ENCODE measurements at regions of chr1 and their contacts with region 1.

Region 1: DNA sequence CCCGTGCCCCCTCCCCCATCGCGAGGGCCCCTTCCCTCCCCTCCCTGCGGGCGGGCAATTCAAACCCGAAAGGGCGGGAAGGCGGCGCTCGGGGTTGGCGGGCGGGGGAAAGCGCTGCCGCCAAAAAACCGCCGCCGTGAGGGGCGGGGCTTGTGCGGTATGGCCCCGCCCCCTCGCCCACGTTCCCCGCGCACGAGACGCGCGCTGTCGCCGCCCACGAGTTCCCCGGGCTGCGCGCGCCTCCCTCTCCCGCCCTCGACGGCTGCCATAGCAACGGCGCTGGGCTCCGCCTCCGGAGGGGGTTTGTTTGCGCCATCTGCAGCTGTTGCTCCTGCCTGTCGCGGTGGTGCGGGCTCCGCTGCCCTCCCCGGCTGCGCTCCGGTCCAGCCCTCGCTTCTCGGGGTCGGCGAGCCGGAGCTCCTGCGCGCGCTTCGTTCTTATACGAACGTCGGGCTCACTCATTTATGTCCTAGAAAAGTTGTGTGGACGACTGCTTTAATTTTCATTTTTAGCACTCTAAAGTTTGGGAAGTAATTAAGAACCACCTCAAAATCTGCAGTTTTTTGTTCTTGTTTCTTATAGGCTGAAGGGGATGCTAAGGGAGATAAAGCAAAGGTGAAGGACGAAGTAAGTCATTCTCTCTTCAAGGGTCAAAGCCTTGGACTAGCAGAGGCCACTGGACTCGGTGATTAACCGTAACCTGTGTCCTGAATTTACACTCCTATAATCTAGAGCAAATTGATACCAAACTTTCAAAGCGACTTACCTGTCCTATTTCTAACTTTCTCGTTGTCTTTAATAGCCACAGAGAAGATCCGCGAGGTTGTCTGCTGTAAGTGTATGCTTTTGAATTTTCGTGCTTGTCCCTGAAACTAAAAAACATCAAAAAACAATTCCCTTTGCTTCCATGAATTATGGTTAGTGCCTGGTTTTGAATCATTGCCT is 933 bp downstream of the HMGN2 start:
- DNase-seq: peak; percentile 96
- ATAC-seq: peak; percentile 59
- H3K4me3 Mint-ChIP-seq: peak overlapping the region; percentile 89
- H3K27ac Mint-ChIP-seq: peak overlapping the region; percentile 86
- H3K4me1 Mint-ChIP-seq: peaks cover 31% of the 10 kb centered on the region
- H3K27me3 Mint-ChIP-seq: no peaks in the 10 kb centered on the region; the same call in 1 of the 2 replicates
- CTCF ChIP-seq: no peak

Region 2: GRCh38 chr1:26363549-26364448 is 109.4 kb before region 1 on chr1:
- CTCF ChIA-PET with region 1: no interaction called
- POLR2A ChIA-PET with region 1: no interaction called
- DNase-seq: peak; percentile 87
- ATAC-seq: peak; percentile 54
- H3K4me3 Mint-ChIP-seq: no peak overlapping the region
- H3K27ac Mint-ChIP-seq: no peak overlapping the region
- H3K4me1 Mint-ChIP-seq: peaks cover 26% of the 10 kb centered on the region
- H3K27me3 Mint-ChIP-seq: peaks cover 43% of the 10 kb centered on the region
- CTCF ChIP-seq: peak; percentile 79

Region 3: GRCh38 chr1:26408604-26409003 is 64.6 kb before region 1 on chr1:
- CTCF ChIA-PET with region 1: interaction called, 4 read pairs
- POLR2A ChIA-PET with region 1: interaction called, 22 read pairs
- DNase-seq: peak; percentile 90
- ATAC-seq: peak; percentile 11
- H3K4me3 Mint-ChIP-seq: peak overlapping the region; percentile 84
- H3K27ac Mint-ChIP-seq: peak overlapping the region; percentile 83
- H3K4me1 Mint-ChIP-seq: peaks cover 32% of the 10 kb centered on the region
- H3K27me3 Mint-ChIP-seq: no peaks in the 10 kb centered on the region; the same call in 1 of the 2 replicates
- CTCF ChIP-seq: no peak

Region 4: GRCh38 chr1:26431979-26432695 is 41.0 kb before region 1 on chr1 and contains the start of gene DHDDS:
- CTCF ChIA-PET with region 1: interaction called, 26 read pairs
- POLR2A ChIA-PET with region 1: interaction called, 15 read pairs
- DNase-seq: peak; percentile 97
- ATAC-seq: peak; percentile 87
- H3K4me3 Mint-ChIP-seq: peak within 1 kb of the TSS; percentile 96
- H3K27ac Mint-ChIP-seq: peak within 1 kb of the TSS; percentile 97
- H3K4me1 Mint-ChIP-seq: peaks cover 44% of the 10 kb centered on the region
- H3K27me3 Mint-ChIP-seq: no peaks in the 10 kb centered on the region
- CTCF ChIP-seq: no peak
- total RNA-seq, gene DHDDS: 44.9 to 55.4 TPM (median 47.1 TPM) in 3 replicates

Region 5: DNA sequence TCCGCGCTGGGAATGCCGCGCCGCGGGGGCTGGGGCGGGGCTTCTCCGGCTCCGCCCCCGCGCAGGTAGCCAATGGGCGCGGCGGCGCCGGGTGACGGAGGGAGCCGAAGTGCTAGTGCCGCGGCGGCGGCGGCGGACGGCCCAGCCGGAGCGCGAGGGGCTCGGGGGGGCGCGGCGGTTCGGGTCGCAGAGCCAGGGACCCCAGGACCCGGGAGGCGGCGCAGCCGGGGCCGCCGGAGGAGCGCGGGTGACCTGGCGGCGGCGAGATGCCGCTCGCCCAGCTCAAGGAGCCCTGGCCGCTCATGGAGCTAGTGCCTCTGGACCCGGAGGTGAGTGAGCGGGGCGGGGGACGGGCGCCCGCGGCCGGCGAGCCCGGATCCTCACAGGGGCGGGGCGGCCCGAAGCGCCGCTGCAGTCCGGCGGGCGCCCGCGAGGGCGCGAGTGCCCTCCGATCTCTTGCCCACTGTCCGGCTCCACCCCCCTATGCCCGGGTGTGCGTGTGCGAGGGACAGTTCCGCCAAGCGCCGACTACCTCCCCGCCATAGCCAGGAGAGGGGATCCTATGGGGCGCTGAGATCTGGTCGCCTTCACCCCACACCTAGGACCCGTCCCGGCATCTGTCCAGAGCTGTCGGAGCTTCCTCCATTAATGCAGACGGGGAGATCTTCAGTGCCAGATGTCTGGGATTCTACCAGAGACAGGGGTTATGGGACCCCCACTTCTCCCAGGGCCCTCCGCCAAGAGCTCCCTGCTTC is 56.7 kb after region 1 on chr1 and contains the start of gene RPS6KA1:
- CTCF ChIA-PET with region 1: interaction called, 18 read pairs
- POLR2A ChIA-PET with region 1: interaction called, 5 read pairs
- DNase-seq: peak; percentile 78
- ATAC-seq: peak; percentile 52
- H3K4me3 Mint-ChIP-seq: peak within 1 kb of the TSS; percentile 91
- H3K27ac Mint-ChIP-seq: peak within 1 kb of the TSS; percentile 94
- H3K4me1 Mint-ChIP-seq: peaks cover 26% of the 10 kb centered on the region
- H3K27me3 Mint-ChIP-seq: peaks cover 10% of the 10 kb centered on the region
- CTCF ChIP-seq: no peak
- total RNA-seq, gene RPS6KA1: 55.6 to 65.5 TPM (median 57.7 TPM) in 3 replicates

Region 6: DNA sequence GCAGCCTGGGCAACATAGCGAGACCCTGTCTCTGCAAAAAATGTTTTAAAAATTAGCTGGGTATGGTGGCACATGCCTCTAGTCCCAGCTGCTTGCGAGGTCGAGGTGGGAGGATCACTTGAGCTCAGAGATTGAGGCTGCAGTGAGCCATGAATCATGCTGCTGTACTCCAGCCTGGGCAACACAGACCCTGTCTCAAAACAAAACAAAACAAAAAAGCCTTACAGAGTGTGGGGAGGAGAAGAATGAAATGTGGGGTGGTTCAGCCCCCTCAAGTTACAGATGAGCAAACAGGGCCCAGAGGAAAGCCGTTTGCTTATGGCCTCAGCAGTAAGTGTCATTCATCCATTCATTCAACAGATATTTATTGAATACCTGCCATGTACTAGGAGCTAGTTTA is 97.1 kb after region 1 on chr1:
- CTCF ChIA-PET with region 1: no interaction called
- POLR2A ChIA-PET with region 1: no interaction called
- DNase-seq: no peak
- ATAC-seq: no peak
- H3K4me3 Mint-ChIP-seq: no peak overlapping the region
- H3K27ac Mint-ChIP-seq: no peak overlapping the region
- H3K4me1 Mint-ChIP-seq: no peaks in the 10 kb centered on the region
- H3K27me3 Mint-ChIP-seq: no peaks in the 10 kb centered on the region
- CTCF ChIP-seq: no peak

Measured in WTC11 (cell line).